ENCODE measurements at regions of chr6 and their contacts with region 1.

Region 1: GRCh38 chr6:155223646-155224451 is 40.0 kb upstream of the CLDN20 start:
- DNase-seq: peak in 1 of 9 donors; percentile 49
- ATAC-seq: peak; percentile 78
- H3K4me3 ChIP-seq: no peak overlapping the region
- H3K4me3 Mint-ChIP-seq: peak overlapping the region in 1 of 10 donors; percentile 42
- H3K27ac ChIP-seq: no peak overlapping the region
- H3K27ac Mint-ChIP-seq: peak overlapping the region in 2 of 9 donors; percentile 43 to 64
- H3K4me1 ChIP-seq: peaks cover 0 to 5% of the 10 kb centered on the region in 2 donors
- H3K4me1 Mint-ChIP-seq: peaks cover 0 to 17% (median 7%) of the 10 kb centered on the region in 7 donors
- H3K27me3 ChIP-seq: no peaks in the 10 kb centered on the region
- H3K27me3 Mint-ChIP-seq: peaks cover 0 to 10% (median 4%) of the 10 kb centered on the region in 5 donors

Region 2: GRCh38 chr6:155186052-155186658 is 37.7 kb before region 1 on chr6:
- CTCF ChIA-PET with region 1: no interaction called
- POLR2A ChIA-PET with region 1: no interaction called
- intact Hi-C with region 1: loop called in 1 of 2 experiments (anchors 1 kb)
- DNase-seq: peak in 1 of 9 donors; percentile 69
- ATAC-seq: no peak
- H3K4me3 ChIP-seq: no peak overlapping the region
- H3K4me3 Mint-ChIP-seq: no peak overlapping the region
- H3K27ac ChIP-seq: no peak overlapping the region
- H3K27ac Mint-ChIP-seq: peak overlapping the region in 1 of 9 donors; percentile 79
- H3K4me1 ChIP-seq: peaks cover 0 to 9% of the 10 kb centered on the region in 2 donors
- H3K4me1 Mint-ChIP-seq: peaks cover 0 to 36% (median 11%) of the 10 kb centered on the region in 7 donors
- H3K27me3 ChIP-seq: no peaks in the 10 kb centered on the region
- H3K27me3 Mint-ChIP-seq: no peaks in the 10 kb centered on the region

Region 3: GRCh38 chr6:155245831-155246230 is 22.0 kb after region 1 on chr6:
- CTCF ChIA-PET with region 1: no interaction called
- POLR2A ChIA-PET with region 1: no interaction called
- intact Hi-C with region 1: no loop called
- DNase-seq: no peak
- ATAC-seq: no peak
- H3K4me3 ChIP-seq: no peak overlapping the region
- H3K4me3 Mint-ChIP-seq: no peak overlapping the region
- H3K27ac ChIP-seq: no peak overlapping the region
- H3K27ac Mint-ChIP-seq: no peak overlapping the region
- H3K4me1 ChIP-seq: no peaks in the 10 kb centered on the region
- H3K4me1 Mint-ChIP-seq: peaks cover 0 to 3% (median 0%) of the 10 kb centered on the region in 7 donors
- H3K27me3 ChIP-seq: no peaks in the 10 kb centered on the region
- H3K27me3 Mint-ChIP-seq: no peaks in the 10 kb centered on the region

Region 4: DNA sequence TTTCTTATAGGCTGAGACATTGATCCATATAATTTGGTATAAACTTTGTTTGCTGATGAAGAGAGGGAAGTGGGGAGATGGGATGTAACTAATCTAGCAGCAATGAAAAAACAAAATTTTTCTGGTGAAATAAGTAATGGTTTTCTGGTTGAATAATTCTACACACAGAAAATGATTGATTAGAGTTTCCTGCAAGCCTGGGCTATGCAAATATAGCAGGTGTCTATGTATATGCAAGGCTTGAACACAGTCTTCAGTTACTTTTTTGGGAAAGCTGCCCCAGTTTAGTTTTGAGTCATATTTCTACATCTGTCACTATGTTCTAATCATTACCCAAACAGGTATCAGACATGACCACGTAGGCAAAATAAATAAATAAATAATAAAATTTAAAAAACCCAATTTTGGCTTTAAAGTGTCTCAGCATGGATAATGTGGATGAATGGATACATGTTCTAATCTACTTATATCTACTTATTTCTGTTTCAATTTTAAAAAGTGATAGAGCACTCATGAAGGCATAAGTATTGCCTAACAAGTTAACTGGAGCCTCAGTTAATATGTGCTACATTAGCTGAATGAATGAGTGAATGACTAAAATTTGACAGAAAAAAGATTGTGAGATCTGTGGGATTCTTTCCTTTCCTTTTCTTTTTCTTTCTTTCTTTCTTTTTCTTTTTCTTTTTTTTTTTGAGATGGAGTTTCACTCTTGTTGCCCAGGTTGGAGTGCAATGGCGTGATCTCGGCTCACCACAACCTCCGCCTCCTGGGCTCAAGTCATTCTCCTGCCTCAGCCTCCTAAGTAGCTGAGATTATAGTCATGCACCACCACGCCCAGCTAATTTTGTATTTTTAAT is 127.7 kb after region 1 on chr6:
- CTCF ChIA-PET with region 1: no interaction called
- POLR2A ChIA-PET with region 1: no interaction called
- intact Hi-C with region 1: no loop called
- DNase-seq: no peak
- ATAC-seq: no peak
- H3K4me3 ChIP-seq: no peak overlapping the region
- H3K4me3 Mint-ChIP-seq: no peak overlapping the region
- H3K27ac ChIP-seq: no peak overlapping the region
- H3K27ac Mint-ChIP-seq: no peak overlapping the region
- H3K4me1 ChIP-seq: no peaks in the 10 kb centered on the region
- H3K4me1 Mint-ChIP-seq: no peaks in the 10 kb centered on the region
- H3K27me3 ChIP-seq: no peaks in the 10 kb centered on the region
- H3K27me3 Mint-ChIP-seq: peaks cover 0 to 10% (median 0%) of the 10 kb centered on the region in 5 donors

Region 5: DNA sequence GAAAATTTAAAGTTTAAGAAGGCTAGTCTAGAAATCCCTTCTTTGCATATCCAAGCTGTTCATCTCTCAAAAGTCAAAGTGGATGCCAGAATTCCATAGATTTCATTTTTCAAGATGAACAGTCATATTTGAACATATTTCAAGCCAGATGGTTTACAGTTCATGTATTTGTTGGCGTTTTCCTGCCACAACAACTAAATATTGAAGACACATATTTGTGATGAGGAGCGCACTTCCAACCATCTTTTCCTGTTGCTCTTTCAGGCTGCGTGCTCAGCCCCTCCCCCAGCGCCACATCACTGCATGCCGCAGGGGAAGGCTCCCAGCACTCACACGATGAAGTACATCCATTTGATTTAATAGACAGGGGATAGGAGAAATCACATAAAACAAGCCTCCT is 237.7 kb after region 1 on chr6:
- CTCF ChIA-PET with region 1: no interaction called
- POLR2A ChIA-PET with region 1: no interaction called
- intact Hi-C with region 1: no loop called
- DNase-seq: no peak
- ATAC-seq: no peak
- H3K4me3 ChIP-seq: no peak overlapping the region
- H3K4me3 Mint-ChIP-seq: no peak overlapping the region
- H3K27ac ChIP-seq: no peak overlapping the region
- H3K27ac Mint-ChIP-seq: no peak overlapping the region
- H3K4me1 ChIP-seq: no peaks in the 10 kb centered on the region
- H3K4me1 Mint-ChIP-seq: no peaks in the 10 kb centered on the region
- H3K27me3 ChIP-seq: no peaks in the 10 kb centered on the region
- H3K27me3 Mint-ChIP-seq: peaks cover 0 to 6% (median 0%) of the 10 kb centered on the region in 5 donors

Region 6: GRCh38 chr6:156146891-156147290 is 923.0 kb after region 1 on chr6:
- CTCF ChIA-PET with region 1: no interaction called
- POLR2A ChIA-PET with region 1: no interaction called
- intact Hi-C with region 1: no loop called
- DNase-seq: no peak
- ATAC-seq: no peak
- H3K4me3 ChIP-seq: no peak overlapping the region
- H3K4me3 Mint-ChIP-seq: no peak overlapping the region
- H3K27ac ChIP-seq: no peak overlapping the region
- H3K27ac Mint-ChIP-seq: no peak overlapping the region
- H3K4me1 ChIP-seq: no peaks in the 10 kb centered on the region
- H3K4me1 Mint-ChIP-seq: peaks cover 0 to 6% (median 0%) of the 10 kb centered on the region in 7 donors
- H3K27me3 ChIP-seq: no peaks in the 10 kb centered on the region
- H3K27me3 Mint-ChIP-seq: no peaks in the 10 kb centered on the region